CD8-positive, alpha-beta T cell (primary cell): ENCODE measurements at regions of chr13 and their contacts with region 1.

Region 1: DNA sequence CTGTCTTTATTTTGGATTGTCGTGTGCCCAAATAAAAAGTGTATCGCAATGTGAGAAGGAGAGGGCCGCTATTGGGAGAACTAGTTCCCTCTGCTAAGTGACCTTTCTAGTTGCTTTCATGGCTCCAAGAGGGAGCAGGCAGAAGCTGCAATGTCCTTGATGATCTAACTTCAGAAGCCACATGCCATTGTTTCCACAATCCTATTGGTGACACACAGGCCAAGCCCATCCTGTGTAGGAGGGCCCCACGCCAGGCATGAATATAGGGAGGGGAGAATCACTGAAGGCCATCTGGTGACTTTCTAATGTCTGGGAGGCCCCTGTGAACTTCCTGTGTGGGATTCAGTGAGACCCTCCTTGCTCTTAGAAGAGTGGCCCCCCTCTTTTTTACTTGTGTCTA is 47.8 kb upstream of the KPNA3 start:
- DNase-seq: no peak
- ATAC-seq: no peak
- H3K4me3 ChIP-seq: no peak overlapping the region
- H3K4me3 Mint-ChIP-seq: no peak overlapping the region
- H3K27ac ChIP-seq: no peak overlapping the region
- H3K27ac Mint-ChIP-seq: no peak overlapping the region
- H3K4me1 ChIP-seq: no peaks in the 10 kb centered on the region
- H3K4me1 Mint-ChIP-seq: no peaks in the 10 kb centered on the region
- H3K27me3 ChIP-seq: no peaks in the 10 kb centered on the region
- H3K27me3 Mint-ChIP-seq: no peaks in the 10 kb centered on the region
- CTCF ChIP-seq: no peak

Region 2: GRCh38 chr13:49421391-49421790 is 418.9 kb before region 1 on chr13:
- CTCF ChIA-PET with region 1: no interaction called
- POLR2A ChIA-PET with region 1: no interaction called
- intact Hi-C with region 1: loop called in 1 of 2 experiments (anchors 10 kb)
- DNase-seq: peak in 7 of 9 experiments; percentile 5 to 56 (median 26)
- ATAC-seq: peak; percentile 59
- H3K4me3 ChIP-seq: no peak overlapping the region
- H3K4me3 Mint-ChIP-seq: no peak overlapping the region
- H3K27ac ChIP-seq: no peak overlapping the region
- H3K27ac Mint-ChIP-seq: no peak overlapping the region
- H3K4me1 ChIP-seq: no peaks in the 10 kb centered on the region
- H3K4me1 Mint-ChIP-seq: no peaks in the 10 kb centered on the region
- H3K27me3 ChIP-seq: no peaks in the 10 kb centered on the region
- H3K27me3 Mint-ChIP-seq: no peaks in the 10 kb centered on the region
- CTCF ChIP-seq: no peak

Region 3: DNA sequence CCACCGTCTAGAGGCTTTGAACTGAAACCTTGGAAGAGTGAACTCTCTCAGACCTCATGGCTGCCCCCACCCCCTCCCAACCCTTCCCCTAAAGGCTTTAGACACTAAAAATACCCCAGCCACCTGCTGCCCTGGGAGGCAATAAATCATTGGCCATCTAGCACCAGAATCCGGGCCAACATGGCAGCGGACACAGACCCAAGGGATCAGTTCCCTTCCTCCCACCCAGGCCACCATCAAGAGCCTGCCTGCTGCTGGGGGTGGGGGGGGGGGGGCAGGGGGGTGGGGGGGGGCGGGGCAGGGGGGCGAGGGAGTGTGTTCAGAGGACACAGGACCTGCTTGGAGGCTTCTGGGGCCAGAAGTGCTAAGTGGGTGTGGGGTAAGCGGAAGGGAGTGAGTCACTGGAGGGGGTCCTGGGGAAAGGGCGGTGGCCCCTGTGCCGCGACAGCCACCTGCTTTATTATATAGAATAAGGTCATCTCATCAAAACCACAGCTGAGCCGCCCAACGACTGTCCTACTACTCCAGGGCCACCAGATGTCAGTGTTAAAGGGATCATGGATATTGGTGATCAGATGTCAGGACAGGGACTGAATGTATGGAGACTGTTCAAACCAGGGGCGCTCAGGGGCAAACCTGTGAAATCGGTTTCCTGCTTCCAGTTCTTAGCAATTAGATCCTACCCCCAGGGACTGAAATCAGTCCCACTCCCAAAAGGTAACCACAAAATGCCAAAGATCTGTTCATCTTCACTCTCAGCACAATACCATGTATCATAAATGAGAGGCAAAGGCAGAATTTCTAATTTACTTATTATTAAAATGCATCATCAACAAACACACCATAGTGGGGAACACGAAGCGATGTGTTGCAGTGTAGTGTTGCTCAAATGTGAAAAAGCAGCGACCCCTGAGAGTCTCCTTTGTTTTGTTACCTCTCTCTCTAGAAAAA is 187.6 kb before region 1 on chr13:
- CTCF ChIA-PET with region 1: no interaction called
- POLR2A ChIA-PET with region 1: no interaction called
- intact Hi-C with region 1: loop called in 1 of 2 experiments (anchors 5 kb)
- DNase-seq: peak in 2 of 9 experiments; percentile 22 to 30
- ATAC-seq: no peak
- H3K4me3 ChIP-seq: no peak overlapping the region
- H3K4me3 Mint-ChIP-seq: no peak overlapping the region
- H3K27ac ChIP-seq: no peak overlapping the region
- H3K27ac Mint-ChIP-seq: no peak overlapping the region
- H3K4me1 ChIP-seq: no peaks in the 10 kb centered on the region
- H3K4me1 Mint-ChIP-seq: no peaks in the 10 kb centered on the region
- H3K27me3 ChIP-seq: no peaks in the 10 kb centered on the region
- H3K27me3 Mint-ChIP-seq: no peaks in the 10 kb centered on the region
- CTCF ChIP-seq: no peak

Region 4: DNA sequence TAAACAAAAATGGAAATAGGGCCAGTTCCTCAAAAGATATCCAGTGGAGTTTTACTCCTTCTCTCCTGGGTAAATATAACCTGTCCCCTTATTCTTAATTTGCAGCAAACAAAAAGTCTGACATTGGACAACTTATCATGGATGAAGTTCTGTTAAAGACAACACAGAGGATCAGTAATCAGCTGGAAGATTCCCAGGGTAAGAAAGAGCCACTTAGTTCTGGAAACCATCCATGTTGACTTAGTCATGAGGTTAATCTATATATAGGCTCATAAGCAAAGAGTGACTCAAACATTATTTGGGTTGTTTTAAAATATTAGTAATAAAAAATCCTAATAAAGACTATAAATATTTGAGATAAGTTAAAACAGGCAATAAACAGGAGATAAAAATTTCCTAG is 108.5 kb before region 1 on chr13:
- CTCF ChIA-PET with region 1: no interaction called
- POLR2A ChIA-PET with region 1: no interaction called
- intact Hi-C with region 1: loop called in 1 of 2 experiments (anchors 10 kb)
- DNase-seq: no peak
- ATAC-seq: no peak
- H3K4me3 ChIP-seq: no peak overlapping the region
- H3K4me3 Mint-ChIP-seq: no peak overlapping the region
- H3K27ac ChIP-seq: no peak overlapping the region
- H3K27ac Mint-ChIP-seq: no peak overlapping the region
- H3K4me1 ChIP-seq: no peaks in the 10 kb centered on the region
- H3K4me1 Mint-ChIP-seq: no peaks in the 10 kb centered on the region
- H3K27me3 ChIP-seq: no peaks in the 10 kb centered on the region
- H3K27me3 Mint-ChIP-seq: no peaks in the 10 kb centered on the region
- CTCF ChIP-seq: no peak

Region 5: GRCh38 chr13:49936085-49936940 is 96.0 kb after region 1 on chr13 and contains the start of gene SPRYD7:
- CTCF ChIA-PET with region 1: no interaction called
- POLR2A ChIA-PET with region 1: no interaction called
- intact Hi-C with region 1: loop called in 1 of 2 experiments (anchors 5 kb)
- DNase-seq: peak; percentile 82 to 97 (median 94)
- ATAC-seq: peak; percentile 85
- H3K4me3 ChIP-seq: peak within 1 kb of the TSS; percentile 81 to 98
- H3K4me3 Mint-ChIP-seq: peak within 1 kb of the TSS; percentile 88
- H3K27ac ChIP-seq: peak within 1 kb of the TSS; percentile 37 to 44
- H3K27ac Mint-ChIP-seq: peak within 1 kb of the TSS; percentile 81
- H3K4me1 ChIP-seq: peaks cover 14% of the 10 kb centered on the region
- H3K4me1 Mint-ChIP-seq: peaks cover 19% of the 10 kb centered on the region
- H3K27me3 ChIP-seq: no peaks in the 10 kb centered on the region
- H3K27me3 Mint-ChIP-seq: no peaks in the 10 kb centered on the region
- CTCF ChIP-seq: peak; percentile 62
- total RNA-seq, gene SPRYD7: 1.2 to 1.4 TPM